Heart left ventricle (tissue), 16 donors: ENCODE measurements at regions of chr10 and their contacts with region 1.

Region 1: DNA sequence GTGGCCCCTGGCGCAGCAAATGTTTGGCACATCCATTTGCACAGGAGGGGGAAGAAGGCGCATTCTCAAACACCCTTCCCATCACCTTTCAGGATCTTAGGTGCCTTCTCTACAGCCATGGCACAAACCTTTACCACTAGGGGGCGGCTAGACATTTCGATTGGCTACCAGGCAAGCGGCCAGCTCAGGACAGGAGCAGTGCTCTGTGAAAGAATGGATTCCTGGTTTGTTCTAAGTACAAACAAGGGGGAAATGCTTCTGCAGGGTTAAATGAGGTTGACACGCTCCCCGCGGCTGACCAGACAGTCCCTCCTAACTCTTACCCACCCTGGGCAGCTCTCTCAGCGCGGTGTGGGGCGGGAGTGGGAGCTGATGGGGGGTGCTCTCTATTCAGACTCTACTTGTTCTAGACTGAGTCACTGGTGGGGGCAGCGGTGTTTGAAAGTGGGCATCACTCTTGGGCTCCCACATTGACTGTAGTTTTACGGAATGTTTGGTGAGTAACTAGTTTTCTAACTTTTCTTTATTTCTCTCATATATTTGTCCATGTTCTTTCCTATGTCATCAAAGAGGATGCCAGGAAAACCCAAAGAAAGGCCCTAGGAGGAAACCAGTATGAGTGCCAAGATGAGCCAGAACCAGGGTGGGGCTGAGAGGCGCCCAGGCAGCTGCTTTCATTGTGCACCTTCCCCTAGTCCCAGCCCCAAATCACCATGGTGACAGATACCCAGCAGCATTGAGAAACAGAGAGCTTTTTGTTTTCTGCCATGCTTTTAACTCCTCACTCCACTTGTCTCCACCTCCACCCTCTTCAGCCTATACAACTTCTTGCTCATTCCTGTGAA is 61.4 kb upstream of the GPR158 start:
- DNase-seq: peak; percentile 70 to 80 (median 74)
- ATAC-seq: peak; percentile 67 to 91 (median 88)
- H3K4me3 ChIP-seq: no peak overlapping the region
- H3K27ac ChIP-seq: no peak overlapping the region
- H3K4me1 ChIP-seq: peaks cover 0 to 6% (median 0%) of the 10 kb centered on the region in 12 donors
- H3K27me3 ChIP-seq: peaks cover 0 to 16% (median 0%) of the 10 kb centered on the region in 9 donors
- CTCF ChIP-seq: peak; percentile 58 to 82 (median 68)
- POLR2A ChIP-seq: no peak

Region 2: GRCh38 chr10:24674892-24675632 is 438.4 kb before region 1 on chr10:
- intact Hi-C with region 1: no loop called
- DNase-seq: no peak
- ATAC-seq: no peak
- H3K4me3 ChIP-seq: no peak overlapping the region
- H3K27ac ChIP-seq: no peak overlapping the region
- H3K4me1 ChIP-seq: peaks cover 0 to 28% (median 9%) of the 10 kb centered on the region in 12 donors
- H3K27me3 ChIP-seq: no peaks in the 10 kb centered on the region
- CTCF ChIP-seq: no peak
- POLR2A ChIP-seq: no peak

Region 3: GRCh38 chr10:25226775-25227682 is 113.6 kb after region 1 on chr10:
- intact Hi-C with region 1: loop called in 9 of 10 experiments (anchors 1 to 10 kb)
- DNase-seq: peak in 4 of 5 donors; percentile 21 to 24 (median 22)
- ATAC-seq: peak in 1 of 4 donors; percentile 42
- H3K4me3 ChIP-seq: no peak overlapping the region
- H3K27ac ChIP-seq: no peak overlapping the region
- H3K4me1 ChIP-seq: no peaks in the 10 kb centered on the region
- H3K27me3 ChIP-seq: no peaks in the 10 kb centered on the region
- CTCF ChIP-seq: peak; percentile 44 to 75 (median 60)
- POLR2A ChIP-seq: no peak

Region 4: GRCh38 chr10:25232204-25232603 is 118.8 kb after region 1 on chr10:
- intact Hi-C with region 1: loop called in 9 of 10 experiments (anchors 1 to 10 kb)
- DNase-seq: no peak
- ATAC-seq: no peak
- H3K4me3 ChIP-seq: no peak overlapping the region
- H3K27ac ChIP-seq: no peak overlapping the region
- H3K4me1 ChIP-seq: no peaks in the 10 kb centered on the region
- H3K27me3 ChIP-seq: no peaks in the 10 kb centered on the region
- CTCF ChIP-seq: no peak
- POLR2A ChIP-seq: no peak

Region 5: DNA sequence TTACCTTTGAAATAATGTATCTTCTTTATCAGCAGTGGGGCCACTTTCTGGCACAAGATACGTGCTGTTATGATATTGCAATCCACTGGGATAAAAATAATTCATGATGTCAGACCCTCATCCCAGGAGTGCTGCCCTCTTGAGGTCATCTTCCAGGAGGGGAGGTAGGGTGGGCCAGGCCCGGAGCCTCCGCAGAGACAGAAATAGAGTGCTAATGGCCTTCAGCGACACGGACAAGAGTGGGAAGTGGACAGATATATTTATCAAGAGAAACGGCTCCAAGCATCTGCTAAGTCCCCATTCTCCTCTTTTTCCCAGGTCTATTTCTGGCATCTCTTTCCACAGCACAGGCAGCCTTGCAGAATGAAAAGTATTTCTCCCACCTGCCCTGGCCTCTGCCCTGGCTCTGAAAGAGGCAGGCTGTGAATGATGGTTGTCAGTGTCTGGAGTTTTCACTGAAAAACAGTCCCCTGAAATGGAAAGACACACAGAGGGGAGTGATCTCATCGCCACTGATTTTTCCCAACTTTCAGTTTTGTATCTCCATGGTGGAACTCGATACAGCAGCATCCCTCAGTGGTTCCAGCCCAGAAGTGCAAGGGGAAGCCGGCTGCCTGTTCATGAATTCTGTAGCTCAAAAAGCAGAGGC is 568.9 kb after region 1 on chr10:
- intact Hi-C with region 1: loop called in 9 of 10 experiments (anchors 2 to 10 kb)
- DNase-seq: peak in 4 of 5 donors; percentile 25 to 49 (median 38)
- ATAC-seq: peak; percentile 79 to 93 (median 88)
- H3K4me3 ChIP-seq: peak overlapping the region in 10 of 12 donors; percentile 11 to 56 (median 38)
- H3K27ac ChIP-seq: peak overlapping the region in 9 of 12 donors; percentile 22 to 82 (median 71)
- H3K4me1 ChIP-seq: peaks cover 0 to 10% (median 7%) of the 10 kb centered on the region in 12 donors
- H3K27me3 ChIP-seq: no peaks in the 10 kb centered on the region
- CTCF ChIP-seq: peak in 11 of 12 donors; percentile 17 to 57 (median 42)
- POLR2A ChIP-seq: no peak

Region 6: GRCh38 chr10:25713894-25714240 is 600.5 kb after region 1 on chr10:
- intact Hi-C with region 1: loop called in 2 of 10 experiments (anchors 5 kb)
- DNase-seq: no peak
- ATAC-seq: no peak
- H3K4me3 ChIP-seq: no peak overlapping the region
- H3K27ac ChIP-seq: no peak overlapping the region
- H3K4me1 ChIP-seq: no peaks in the 10 kb centered on the region
- H3K27me3 ChIP-seq: peaks cover 0 to 5% (median 0%) of the 10 kb centered on the region in 9 donors
- CTCF ChIP-seq: no peak
- POLR2A ChIP-seq: no peak

Region 7: GRCh38 chr10:26296355-26296754 is 1182.9 kb after region 1 on chr10:
- intact Hi-C with region 1: no loop called
- DNase-seq: no peak
- ATAC-seq: no peak
- H3K4me3 ChIP-seq: no peak overlapping the region
- H3K27ac ChIP-seq: no peak overlapping the region
- H3K4me1 ChIP-seq: no peaks in the 10 kb centered on the region
- H3K27me3 ChIP-seq: peaks cover 0 to 3% (median 0%) of the 10 kb centered on the region in 9 donors
- CTCF ChIP-seq: no peak
- POLR2A ChIP-seq: no peak